ENCODE measurements at regions of chr1 and their contacts with region 1.

Region 1: DNA sequence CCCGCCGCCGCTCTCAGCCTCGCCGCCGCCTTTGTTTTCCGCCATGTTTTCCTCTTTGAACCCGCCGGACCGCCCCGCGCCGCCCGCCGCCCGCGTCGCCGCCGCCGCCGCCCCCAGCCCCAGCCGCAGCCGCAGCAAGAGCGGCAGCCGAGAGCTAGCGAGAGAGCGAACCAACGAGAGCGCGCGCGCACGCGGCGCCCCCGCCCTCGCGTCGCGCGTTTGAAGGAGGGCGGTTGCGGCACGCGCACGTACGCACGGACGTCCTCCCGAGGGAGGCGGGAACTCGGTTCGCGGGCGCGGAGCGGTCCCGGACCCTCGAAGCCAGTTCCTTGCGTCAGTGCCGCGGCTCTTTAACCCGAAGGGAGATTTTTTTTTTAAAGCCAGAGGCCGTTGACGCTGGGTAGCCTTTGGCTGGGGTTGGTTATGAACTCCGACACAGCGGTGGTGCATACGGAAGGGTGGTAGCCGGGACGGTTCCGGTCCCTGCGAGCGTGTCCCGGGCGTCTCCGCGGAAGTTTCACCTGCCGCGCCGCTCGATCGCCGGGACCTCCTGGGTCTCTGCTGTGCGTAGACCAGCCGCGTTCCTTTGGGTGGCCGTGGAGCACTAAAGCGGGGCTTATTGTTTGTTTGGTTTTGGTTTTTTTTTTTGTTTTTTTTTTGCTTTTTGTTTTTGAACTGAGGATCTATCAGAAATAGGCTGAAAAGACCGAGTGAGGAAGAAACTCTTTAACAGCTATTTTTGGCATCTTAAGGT is at the start of gene TRIM33:
- DNase-seq: peak; percentile 91 to 95 (median 94)
- H3K4me3 ChIP-seq: peak within 1 kb of the TSS; percentile 75 to 85
- H3K4me3 Mint-ChIP-seq: peak within 1 kb of the TSS; percentile 97 to 100 (median 98)
- H3K27ac ChIP-seq: peak within 1 kb of the TSS; percentile 96
- H3K27ac Mint-ChIP-seq: peak within 1 kb of the TSS; percentile 97 to 100 (median 100)
- H3K4me1 ChIP-seq: peaks cover 41% of the 10 kb centered on the region
- H3K4me1 Mint-ChIP-seq: peaks cover 38 to 55% (median 47%) of the 10 kb centered on the region in 4 donors
- H3K27me3 ChIP-seq: no peaks in the 10 kb centered on the region
- H3K27me3 Mint-ChIP-seq: no peaks in the 10 kb centered on the region
- total RNA-seq, gene TRIM33: 50.6 to 54.4 TPM

Region 2: GRCh38 chr1:112955781-112956543 is 1555.2 kb before region 1 on chr1 and contains the start of gene SLC16A1:
- CTCF ChIA-PET with region 1: no interaction called
- POLR2A ChIA-PET with region 1: interaction called, 3 read pairs
- intact Hi-C with region 1: loop called (anchors 5 kb)
- DNase-seq: peak; percentile 85 to 89 (median 87)
- H3K4me3 ChIP-seq: peak within 1 kb of the TSS; percentile 59 to 96
- H3K4me3 Mint-ChIP-seq: peak within 1 kb of the TSS; percentile 76 to 99 (median 97)
- H3K27ac ChIP-seq: peak within 1 kb of the TSS; percentile 80
- H3K27ac Mint-ChIP-seq: peak within 1 kb of the TSS; percentile 68 to 98 (median 95)
- H3K4me1 ChIP-seq: peaks cover 34% of the 10 kb centered on the region
- H3K4me1 Mint-ChIP-seq: peaks cover 38 to 73% (median 52%) of the 10 kb centered on the region in 4 donors
- H3K27me3 ChIP-seq: no peaks in the 10 kb centered on the region
- H3K27me3 Mint-ChIP-seq: no peaks in the 10 kb centered on the region
- total RNA-seq, gene SLC16A1: 9.7 to 12.7 TPM

Region 3: DNA sequence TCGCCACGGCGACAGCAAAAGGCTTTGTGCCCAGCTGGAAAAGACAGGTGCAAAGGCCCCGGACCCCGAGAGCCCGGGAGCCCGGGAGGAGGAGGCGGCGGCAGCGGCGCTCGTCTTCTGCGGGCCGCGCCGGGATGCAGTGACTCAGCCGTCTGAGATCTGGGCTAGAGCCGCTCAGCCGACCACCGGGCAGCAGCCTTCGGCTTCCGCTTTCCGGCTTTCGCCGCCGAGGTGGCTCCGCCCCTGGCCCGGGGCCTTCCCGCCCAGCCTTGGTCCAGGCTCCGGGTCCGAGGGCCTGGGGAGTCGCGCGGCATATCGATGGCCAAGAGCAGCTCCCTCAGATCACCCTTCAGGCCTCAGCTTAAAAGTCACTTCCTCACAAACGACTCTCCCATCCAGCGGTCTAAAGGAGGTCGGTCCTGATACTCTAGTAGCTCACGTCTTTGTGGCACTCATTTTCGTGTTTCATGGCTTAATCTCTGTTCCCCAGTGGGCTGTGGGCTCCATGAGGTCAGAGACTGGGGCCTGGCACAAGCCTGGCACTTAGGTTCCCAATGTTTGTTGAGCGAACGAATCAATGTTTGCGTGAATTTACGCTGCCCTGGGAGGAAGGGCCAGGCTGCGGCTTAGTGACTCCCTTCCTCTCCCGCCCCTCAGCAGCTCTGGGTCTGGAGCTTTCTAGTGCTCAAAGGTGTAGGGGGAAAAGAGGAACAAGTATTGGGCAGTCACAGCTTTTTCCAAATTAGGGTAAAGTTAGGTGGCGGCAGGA is 751.7 kb before region 1 on chr1 and contains the start of gene PHTF1:
- CTCF ChIA-PET with region 1: no interaction called
- POLR2A ChIA-PET with region 1: no interaction called
- intact Hi-C with region 1: loop called (anchors 5 kb)
- DNase-seq: peak in 4 of 5 donors; percentile 33 to 70 (median 46)
- H3K4me3 ChIP-seq: peak within 1 kb of the TSS; percentile 59 to 77
- H3K4me3 Mint-ChIP-seq: peak within 1 kb of the TSS; percentile 92 to 98 (median 94)
- H3K27ac ChIP-seq: peak within 1 kb of the TSS; percentile 91
- H3K27ac Mint-ChIP-seq: peak within 1 kb of the TSS; percentile 94 to 98 (median 97)
- H3K4me1 ChIP-seq: peaks cover 16% of the 10 kb centered on the region
- H3K4me1 Mint-ChIP-seq: peaks cover 16 to 36% (median 25%) of the 10 kb centered on the region in 4 donors
- H3K27me3 ChIP-seq: no peaks in the 10 kb centered on the region
- H3K27me3 Mint-ChIP-seq: no peaks in the 10 kb centered on the region
- total RNA-seq, gene PHTF1: 8.7 to 9.8 TPM

Region 4: DNA sequence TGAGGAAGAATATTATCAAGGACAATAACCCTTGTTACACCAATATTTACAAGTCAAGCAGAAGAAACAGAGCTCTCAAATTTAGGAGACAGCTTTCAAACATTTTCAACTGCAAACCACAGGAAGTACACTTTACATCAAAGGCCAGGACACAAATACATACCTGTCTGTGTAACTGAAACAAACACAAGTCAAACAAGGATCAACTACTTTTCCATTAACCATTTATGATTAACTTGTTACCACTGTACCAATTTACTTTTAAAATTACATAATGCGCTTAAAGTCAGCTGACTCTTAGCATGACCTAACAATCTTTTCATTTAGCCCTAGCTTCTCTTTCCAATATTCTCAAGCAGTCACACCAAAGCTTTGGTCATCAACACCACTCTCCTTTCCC is 43.7 kb before region 1 on chr1:
- CTCF ChIA-PET with region 1: interaction called, 3 read pairs
- POLR2A ChIA-PET with region 1: interaction called, 18 read pairs
- intact Hi-C with region 1: loop called (anchors 2 kb)
- DNase-seq: peak in 4 of 5 donors; percentile 10 to 27 (median 16)
- H3K4me3 ChIP-seq: no peak overlapping the region
- H3K4me3 Mint-ChIP-seq: peak overlapping the region in 6 of 8 donors; percentile 10 to 74 (median 58)
- H3K27ac ChIP-seq: no peak overlapping the region
- H3K27ac Mint-ChIP-seq: peak overlapping the region; percentile 3 to 82 (median 30)
- H3K4me1 ChIP-seq: peaks cover 45% of the 10 kb centered on the region
- H3K4me1 Mint-ChIP-seq: peaks cover 50 to 68% (median 58%) of the 10 kb centered on the region in 4 donors
- H3K27me3 ChIP-seq: no peaks in the 10 kb centered on the region
- H3K27me3 Mint-ChIP-seq: no peaks in the 10 kb centered on the region

Region 5: GRCh38 chr1:114581335-114582287 is 70.4 kb after region 1 on chr1 and contains the start of gene BCAS2:
- CTCF ChIA-PET with region 1: interaction called, 4 read pairs
- POLR2A ChIA-PET with region 1: interaction called, 39 read pairs
- intact Hi-C with region 1: loop called (anchors 1 kb)
- DNase-seq: peak; percentile 93 to 98 (median 97)
- H3K4me3 ChIP-seq: peak within 1 kb of the TSS; percentile 76 to 80
- H3K4me3 Mint-ChIP-seq: peak within 1 kb of the TSS; percentile 95 to 99 (median 96)
- H3K27ac ChIP-seq: peak within 1 kb of the TSS; percentile 90
- H3K27ac Mint-ChIP-seq: peak within 1 kb of the TSS; percentile 92 to 100 (median 99)
- H3K4me1 ChIP-seq: peaks cover 30% of the 10 kb centered on the region
- H3K4me1 Mint-ChIP-seq: peaks cover 14 to 42% (median 27%) of the 10 kb centered on the region in 4 donors
- H3K27me3 ChIP-seq: no peaks in the 10 kb centered on the region
- H3K27me3 Mint-ChIP-seq: peaks cover 0 to 1% of the 10 kb centered on the region in 2 donors
- total RNA-seq, gene BCAS2: 33.9 to 40.8 TPM

Region 6: DNA sequence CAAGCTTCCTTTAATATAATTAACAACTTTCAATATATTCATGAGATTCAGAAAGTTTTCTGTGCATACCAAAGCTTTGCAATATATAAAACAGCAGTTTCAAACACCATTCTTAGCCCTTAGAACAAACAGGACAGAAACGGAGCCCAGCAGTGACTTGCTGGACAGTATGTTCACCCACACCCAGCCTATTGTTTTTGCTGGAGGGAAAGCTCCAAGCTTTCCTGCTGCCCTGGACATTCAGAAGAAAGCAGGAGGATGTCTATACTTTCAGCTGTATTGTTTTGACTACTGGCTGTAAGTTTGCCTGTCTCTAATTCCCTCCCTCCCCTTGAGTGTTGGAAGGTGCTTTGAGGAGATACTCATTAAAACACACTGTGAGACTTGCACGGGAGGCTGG is 149.0 kb after region 1 on chr1:
- CTCF ChIA-PET with region 1: no interaction called
- POLR2A ChIA-PET with region 1: no interaction called
- intact Hi-C with region 1: no loop called
- DNase-seq: no peak
- H3K4me3 ChIP-seq: no peak overlapping the region
- H3K4me3 Mint-ChIP-seq: peak overlapping the region in 1 of 8 donors; percentile 15
- H3K27ac ChIP-seq: no peak overlapping the region
- H3K27ac Mint-ChIP-seq: no peak overlapping the region
- H3K4me1 ChIP-seq: no peaks in the 10 kb centered on the region
- H3K4me1 Mint-ChIP-seq: no peaks in the 10 kb centered on the region
- H3K27me3 ChIP-seq: no peaks in the 10 kb centered on the region
- H3K27me3 Mint-ChIP-seq: peaks cover 13% of the 10 kb centered on the region in 2 donors

Region 7: GRCh38 chr1:114716304-114717170 is 205.3 kb after region 1 on chr1 and contains the start of gene NRAS:
- CTCF ChIA-PET with region 1: no interaction called
- POLR2A ChIA-PET with region 1: interaction called, 9 read pairs
- intact Hi-C with region 1: loop called (anchors 1 kb)
- DNase-seq: peak; percentile 93 to 96 (median 94)
- H3K4me3 ChIP-seq: peak within 1 kb of the TSS; percentile 83 to 90
- H3K4me3 Mint-ChIP-seq: peak within 1 kb of the TSS; percentile 94 to 99 (median 98)
- H3K27ac ChIP-seq: peak within 1 kb of the TSS; percentile 97
- H3K27ac Mint-ChIP-seq: peak within 1 kb of the TSS; percentile 99 to 100 (median 100)
- H3K4me1 ChIP-seq: peaks cover 21% of the 10 kb centered on the region
- H3K4me1 Mint-ChIP-seq: peaks cover 10 to 25% (median 19%) of the 10 kb centered on the region in 4 donors
- H3K27me3 ChIP-seq: no peaks in the 10 kb centered on the region
- H3K27me3 Mint-ChIP-seq: no peaks in the 10 kb centered on the region
- total RNA-seq, gene NRAS: 22.0 to 22.3 TPM

Region 8: DNA sequence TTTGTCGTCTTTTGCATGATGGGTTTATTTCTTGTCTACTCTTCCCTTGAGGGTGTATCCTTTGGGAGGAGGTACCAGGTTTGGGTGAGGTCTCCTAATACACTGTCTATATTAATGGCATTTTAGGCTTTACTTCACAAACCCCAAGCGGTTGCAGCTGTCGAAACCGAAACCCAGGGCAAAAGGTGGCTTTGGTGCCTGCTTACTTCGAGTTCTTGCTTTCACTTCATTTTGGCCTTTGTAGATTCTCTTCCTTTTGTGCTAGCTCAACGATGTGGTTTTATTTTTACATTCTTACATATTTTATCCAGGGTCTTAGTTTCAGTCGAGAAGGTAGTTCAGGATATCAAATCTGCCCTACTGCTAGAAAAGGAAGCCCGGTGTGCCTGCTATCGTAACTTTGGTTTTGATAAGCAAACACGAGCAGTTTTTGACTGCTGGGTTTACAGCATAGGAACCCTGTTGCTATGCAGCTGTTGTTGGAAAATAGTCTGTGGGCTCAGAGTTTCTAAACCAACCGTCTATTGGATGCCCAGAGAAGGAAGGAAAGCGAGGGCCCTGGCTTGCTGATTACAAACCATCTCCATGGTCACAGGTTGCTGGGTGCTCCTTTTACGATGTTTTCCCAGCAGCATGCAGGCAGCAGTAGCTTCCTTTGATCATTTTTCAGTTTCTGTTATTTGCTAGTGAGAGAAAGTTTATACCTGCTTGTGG is 587.9 kb after region 1 on chr1:
- CTCF ChIA-PET with region 1: no interaction called
- POLR2A ChIA-PET with region 1: no interaction called
- intact Hi-C with region 1: loop called (anchors 1 kb)
- DNase-seq: peak; percentile 88 to 96 (median 94)
- H3K4me3 ChIP-seq: peak overlapping the region; percentile 38 to 58
- H3K4me3 Mint-ChIP-seq: peak overlapping the region; percentile 87 to 99 (median 95)
- H3K27ac ChIP-seq: peak overlapping the region; percentile 89
- H3K27ac Mint-ChIP-seq: peak overlapping the region; percentile 94 to 100 (median 100)
- H3K4me1 ChIP-seq: peaks cover 40% of the 10 kb centered on the region
- H3K4me1 Mint-ChIP-seq: peaks cover 45 to 64% (median 53%) of the 10 kb centered on the region in 4 donors
- H3K27me3 ChIP-seq: no peaks in the 10 kb centered on the region
- H3K27me3 Mint-ChIP-seq: no peaks in the 10 kb centered on the region